Calu3 (cell line): ENCODE measurements at regions of chr1 and their contacts with region 1.

Region 1: GRCh38 chr1:220217383-220217988 is 54.8 kb downstream of the RAB3GAP2 start:
- DNase-seq: peak; percentile 44
- H3K4me3 Mint-ChIP-seq: no peak overlapping the region
- H3K27ac Mint-ChIP-seq: no peak overlapping the region
- H3K4me1 Mint-ChIP-seq: no peaks in the 10 kb centered on the region
- H3K27me3 Mint-ChIP-seq: no peaks in the 10 kb centered on the region
- CTCF ChIP-seq: no peak

Region 2: GRCh38 chr1:219938706-219939105 is 278.8 kb before region 1 on chr1:
- CTCF ChIA-PET with region 1: no interaction called
- intact Hi-C with region 1: no loop called
- DNase-seq: no peak
- H3K4me3 Mint-ChIP-seq: no peak overlapping the region
- H3K27ac Mint-ChIP-seq: no peak overlapping the region
- H3K4me1 Mint-ChIP-seq: no peaks in the 10 kb centered on the region
- H3K27me3 Mint-ChIP-seq: peaks cover 51% of the 10 kb centered on the region
- CTCF ChIP-seq: no peak

Region 3: DNA sequence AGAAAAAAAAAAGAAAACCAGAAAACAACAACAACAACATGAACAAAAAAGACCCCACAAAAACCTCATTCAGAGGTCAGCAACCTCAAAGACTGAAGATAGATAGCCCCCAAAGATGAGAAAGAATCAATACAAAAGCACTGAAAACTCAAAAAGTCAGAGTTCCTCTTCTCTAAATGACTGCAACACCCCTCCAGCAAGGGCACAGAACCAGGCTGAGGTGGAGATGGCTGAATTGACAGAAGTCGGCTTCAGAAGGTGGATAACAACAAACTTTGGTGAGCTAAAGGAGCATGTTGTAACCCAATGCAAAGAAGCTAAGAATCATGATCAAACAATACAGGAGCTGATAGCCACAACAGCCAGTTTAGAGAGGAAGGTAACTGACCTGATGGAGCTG is 37.7 kb after region 1 on chr1:
- CTCF ChIA-PET with region 1: no interaction called
- intact Hi-C with region 1: no loop called
- DNase-seq: no peak
- H3K4me3 Mint-ChIP-seq: no peak overlapping the region
- H3K27ac Mint-ChIP-seq: no peak overlapping the region
- H3K4me1 Mint-ChIP-seq: no peaks in the 10 kb centered on the region
- H3K27me3 Mint-ChIP-seq: no peaks in the 10 kb centered on the region
- CTCF ChIP-seq: no peak

Region 4: GRCh38 chr1:220272047-220272840 is 54.8 kb after region 1 on chr1 and contains the start of gene RAB3GAP2:
- CTCF ChIA-PET with region 1: interaction called, 5 read pairs
- intact Hi-C with region 1: loop called (anchors 5 kb)
- DNase-seq: peak; percentile 98
- H3K4me3 Mint-ChIP-seq: no peak within 1 kb of the TSS
- H3K27ac Mint-ChIP-seq: no peak within 1 kb of the TSS
- H3K4me1 Mint-ChIP-seq: no peaks in the 10 kb centered on the region
- H3K27me3 Mint-ChIP-seq: peaks cover 30% of the 10 kb centered on the region
- CTCF ChIP-seq: no peak
- total RNA-seq, gene RAB3GAP2: 43.2 and 48.0 TPM in 2 replicates